GM12878 (cell line): ENCODE measurements at regions of chrX and their contacts with region 1.

Region 1: DNA sequence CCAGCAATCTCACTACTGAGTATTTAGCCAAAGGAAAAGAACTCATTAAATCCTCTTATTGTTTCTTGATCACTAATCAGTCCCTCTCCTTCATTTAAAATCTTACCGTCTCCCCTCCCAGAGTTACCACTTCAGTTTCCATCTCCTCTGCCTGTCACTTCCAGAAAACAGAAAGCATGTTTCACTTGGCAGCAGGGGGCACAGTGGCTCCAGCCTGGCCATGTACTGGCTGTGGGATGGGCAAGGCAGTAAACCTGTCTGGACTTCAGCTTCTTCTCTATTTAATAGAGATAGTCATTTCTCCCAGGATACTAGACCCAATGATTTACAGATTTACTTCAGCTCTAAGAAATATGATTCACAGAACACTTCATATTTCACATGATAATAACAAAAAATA is 63.2 kb downstream of the CD40LG start:
- DNase-seq: no peak
- ATAC-seq: peak; percentile 58
- H3K4me3 ChIP-seq: no peak overlapping the region
- H3K27ac ChIP-seq: peak overlapping the region; percentile 74; the same call in 1 of the 2 replicates
- H3K4me1 ChIP-seq: peaks cover 11% of the 10 kb centered on the region
- H3K27me3 ChIP-seq: no peaks in the 10 kb centered on the region
- CTCF ChIP-seq: peak; percentile 29 to 54 (median 32); a peak in 4 of 6 replicates
- EP300 ChIP-seq: no peak
- POLR2A ChIP-seq: no peak
- RAD21 ChIP-seq: peak; percentile 77

Region 2: DNA sequence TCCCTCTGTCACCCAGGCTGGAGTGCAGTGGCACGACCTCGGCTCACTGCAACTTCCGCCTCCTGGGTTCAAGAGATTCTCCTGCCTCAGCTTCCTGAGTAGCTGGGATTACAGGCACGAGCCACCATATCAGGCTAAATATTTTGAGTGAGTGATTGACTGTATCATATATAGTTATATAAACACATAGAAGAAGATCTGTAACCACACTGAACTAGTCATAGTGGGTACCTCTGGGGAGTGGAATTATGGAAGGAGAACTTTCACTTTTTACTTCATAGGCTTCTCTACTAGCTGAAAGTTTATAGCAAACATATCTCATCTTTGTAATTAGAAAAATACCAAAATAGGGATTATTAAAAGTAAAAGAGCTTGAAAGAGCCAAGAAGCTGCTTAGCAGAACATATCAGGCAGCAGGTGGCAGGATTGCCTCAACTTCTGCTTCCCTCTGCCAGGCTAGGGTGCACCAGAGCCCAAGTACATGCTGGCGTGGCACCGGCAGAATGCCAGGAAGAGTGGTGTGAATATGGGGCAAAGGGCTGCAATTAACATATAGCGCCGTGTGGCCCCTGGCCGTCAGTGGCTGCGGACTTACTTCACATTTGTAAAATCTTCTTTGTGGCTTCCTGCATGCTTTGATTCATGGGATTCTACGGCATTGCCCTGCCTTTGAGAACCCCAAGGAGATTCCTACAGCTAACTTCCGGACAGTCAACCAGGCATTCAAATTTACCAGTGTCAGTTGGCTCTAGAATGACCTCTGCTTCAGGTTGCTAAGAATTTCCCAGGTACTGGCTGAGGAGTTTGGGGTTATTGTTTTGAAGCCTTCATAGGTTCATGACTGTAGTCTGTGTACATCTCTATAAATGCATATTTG is 102.6 kb before region 1 on chrX:
- CTCF ChIA-PET with region 1: interaction called, 13 read pairs
- POLR2A ChIA-PET with region 1: no interaction called
- RAD21 ChIA-PET with region 1: interaction called, 11 read pairs
- SMC1A ChIA-PET with region 1: interaction called, 6 read pairs
- in situ Hi-C with region 1: no loop called
- intact Hi-C with region 1: no loop called
- DNase-seq: no peak
- ATAC-seq: peak; percentile 80
- H3K4me3 ChIP-seq: no peak overlapping the region
- H3K27ac ChIP-seq: no peak overlapping the region
- H3K4me1 ChIP-seq: no peaks in the 10 kb centered on the region
- H3K27me3 ChIP-seq: no peaks in the 10 kb centered on the region
- CTCF ChIP-seq: peak; percentile 14 to 37 (median 29); a peak in 4 of 6 replicates
- EP300 ChIP-seq: no peak
- POLR2A ChIP-seq: no peak
- RAD21 ChIP-seq: peak; percentile 64

Region 3: DNA sequence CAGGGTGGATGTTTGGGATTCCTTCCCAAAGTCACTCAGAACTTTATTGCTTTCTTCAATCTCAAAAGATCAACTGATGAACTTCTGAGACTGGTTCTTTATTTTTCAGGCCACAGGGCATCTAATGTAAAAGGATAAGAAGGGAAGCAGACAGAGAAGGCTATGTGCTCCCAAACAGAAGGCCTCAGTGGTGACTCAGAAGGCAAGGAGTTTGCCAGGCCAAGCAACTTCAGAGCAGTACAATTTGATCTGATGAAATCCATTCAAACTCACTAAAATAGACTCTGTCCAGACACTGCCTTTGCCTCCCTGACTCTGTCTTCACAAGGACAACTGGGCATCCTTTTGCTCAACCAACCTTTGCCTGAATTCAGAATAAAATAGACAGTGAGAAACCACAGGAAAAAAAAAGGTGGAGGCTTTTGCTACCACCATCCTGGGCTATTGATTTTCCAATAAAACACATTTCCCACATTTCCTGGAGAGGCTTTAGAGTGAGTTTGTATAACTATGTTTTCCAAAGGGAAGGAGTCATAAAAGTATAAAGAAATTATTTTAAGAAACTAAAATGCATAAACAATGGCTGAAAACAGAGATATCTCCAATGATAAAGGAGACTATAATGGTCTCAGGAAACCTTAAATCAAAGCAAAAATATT is 14.4 kb after region 1 on chrX:
- CTCF ChIA-PET with region 1: interaction called, 7 read pairs
- POLR2A ChIA-PET with region 1: no interaction called
- RAD21 ChIA-PET with region 1: no interaction called
- SMC1A ChIA-PET with region 1: interaction called, 11 read pairs
- in situ Hi-C with region 1: no loop called
- intact Hi-C with region 1: no loop called
- DNase-seq: no peak
- ATAC-seq: no peak
- H3K4me3 ChIP-seq: no peak overlapping the region
- H3K27ac ChIP-seq: no peak overlapping the region
- H3K4me1 ChIP-seq: no peaks in the 10 kb centered on the region
- H3K27me3 ChIP-seq: no peaks in the 10 kb centered on the region
- CTCF ChIP-seq: no peak
- EP300 ChIP-seq: no peak
- POLR2A ChIP-seq: no peak
- RAD21 ChIP-seq: no peak

Region 4: GRCh38 chrX:136767104-136767941 is 56.2 kb after region 1 on chrX:
- CTCF ChIA-PET with region 1: interaction called, 4 read pairs
- POLR2A ChIA-PET with region 1: no interaction called
- RAD21 ChIA-PET with region 1: interaction called, 5 read pairs
- SMC1A ChIA-PET with region 1: interaction called, 6 read pairs
- in situ Hi-C with region 1: no loop called
- intact Hi-C with region 1: loop called (anchors 5 kb)
- DNase-seq: no peak
- ATAC-seq: peak; percentile 87
- H3K4me3 ChIP-seq: peak overlapping the region; percentile 68
- H3K27ac ChIP-seq: peak overlapping the region; percentile 58
- H3K4me1 ChIP-seq: peaks cover 10% of the 10 kb centered on the region
- H3K27me3 ChIP-seq: no peaks in the 10 kb centered on the region
- CTCF ChIP-seq: peak in 2 of 3 experiments; percentile 12 to 42; a peak in 2 of 6 replicates
- EP300 ChIP-seq: no peak
- POLR2A ChIP-seq: peak; percentile 75
- RAD21 ChIP-seq: peak; percentile 28; the same call in 1 of the 2 replicates

Region 5: DNA sequence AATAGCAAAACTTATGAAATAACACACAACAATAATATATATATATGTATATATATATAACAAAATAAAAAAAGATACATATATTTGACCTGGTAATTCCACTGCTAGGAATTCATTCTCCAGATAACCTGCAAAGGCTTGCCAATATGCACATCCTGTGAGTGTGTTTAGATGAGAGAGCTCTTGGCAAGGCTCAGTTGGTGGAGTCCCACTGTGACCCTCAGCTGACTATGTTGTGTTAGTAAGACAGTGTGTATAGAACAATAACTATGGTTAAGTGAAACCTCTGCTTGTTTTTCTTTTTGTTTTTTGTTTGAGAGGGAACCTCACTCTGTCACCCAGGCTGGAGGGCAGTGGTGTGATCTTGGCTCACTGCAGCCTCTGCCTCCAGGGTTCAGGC is 208.9 kb after region 1 on chrX:
- CTCF ChIA-PET with region 1: interaction called, 22 read pairs
- POLR2A ChIA-PET with region 1: no interaction called
- RAD21 ChIA-PET with region 1: interaction called, 4 read pairs
- SMC1A ChIA-PET with region 1: interaction called, 10 read pairs
- in situ Hi-C with region 1: loop called (anchors 5 kb)
- intact Hi-C with region 1: loop called (anchors 1 kb)
- DNase-seq: no peak
- ATAC-seq: no peak
- H3K4me3 ChIP-seq: no peak overlapping the region
- H3K27ac ChIP-seq: no peak overlapping the region
- H3K4me1 ChIP-seq: no peaks in the 10 kb centered on the region
- H3K27me3 ChIP-seq: no peaks in the 10 kb centered on the region
- CTCF ChIP-seq: no peak
- EP300 ChIP-seq: no peak
- POLR2A ChIP-seq: no peak
- RAD21 ChIP-seq: no peak